ENCODE measurements at regions of chr9 and their contacts with region 1.

Region 1: GRCh38 chr9:116661037-116661954 is 25.8 kb upstream of the TRIM32 start:
- DNase-seq: peak; percentile 81
- H3K4me3 ChIP-seq: no peak overlapping the region
- H3K27ac ChIP-seq: no peak overlapping the region
- H3K4me1 ChIP-seq: peaks cover 22% of the 10 kb centered on the region
- H3K27me3 ChIP-seq: no peaks in the 10 kb centered on the region
- CTCF ChIP-seq: peak; percentile 86

Region 2: DNA sequence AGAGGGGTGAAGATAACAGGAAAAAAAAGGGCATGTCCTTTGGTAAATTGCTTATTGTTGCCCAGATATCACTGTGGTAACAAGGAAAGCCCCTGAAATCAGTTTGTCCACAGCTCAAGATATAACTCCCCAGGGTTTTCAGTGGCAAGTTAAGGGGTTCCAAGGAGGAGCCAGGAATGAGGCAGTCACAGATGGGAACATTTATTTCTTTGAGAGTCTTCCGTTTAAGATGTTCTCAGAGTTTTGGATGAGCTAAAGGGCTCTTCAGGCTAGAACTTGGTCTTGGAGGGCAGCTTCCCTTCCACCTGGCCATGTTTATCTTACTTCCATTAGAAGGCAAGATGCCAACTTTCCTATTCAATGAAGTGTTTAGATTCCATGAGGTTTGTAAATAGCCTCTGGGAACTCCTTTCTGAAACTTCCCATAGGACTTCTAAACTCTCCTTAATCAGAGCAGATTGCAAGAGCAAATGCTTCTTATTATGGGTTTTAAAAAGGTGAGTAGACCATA is 1265.7 kb before region 1 on chr9:
- CTCF ChIA-PET with region 1: interaction called, 10 read pairs
- POLR2A ChIA-PET with region 1: no interaction called
- intact Hi-C with region 1: no loop called
- DNase-seq: no peak
- H3K4me3 ChIP-seq: no peak overlapping the region
- H3K27ac ChIP-seq: no peak overlapping the region
- H3K4me1 ChIP-seq: peaks cover 61% of the 10 kb centered on the region
- H3K27me3 ChIP-seq: no peaks in the 10 kb centered on the region
- CTCF ChIP-seq: no peak

Region 3: DNA sequence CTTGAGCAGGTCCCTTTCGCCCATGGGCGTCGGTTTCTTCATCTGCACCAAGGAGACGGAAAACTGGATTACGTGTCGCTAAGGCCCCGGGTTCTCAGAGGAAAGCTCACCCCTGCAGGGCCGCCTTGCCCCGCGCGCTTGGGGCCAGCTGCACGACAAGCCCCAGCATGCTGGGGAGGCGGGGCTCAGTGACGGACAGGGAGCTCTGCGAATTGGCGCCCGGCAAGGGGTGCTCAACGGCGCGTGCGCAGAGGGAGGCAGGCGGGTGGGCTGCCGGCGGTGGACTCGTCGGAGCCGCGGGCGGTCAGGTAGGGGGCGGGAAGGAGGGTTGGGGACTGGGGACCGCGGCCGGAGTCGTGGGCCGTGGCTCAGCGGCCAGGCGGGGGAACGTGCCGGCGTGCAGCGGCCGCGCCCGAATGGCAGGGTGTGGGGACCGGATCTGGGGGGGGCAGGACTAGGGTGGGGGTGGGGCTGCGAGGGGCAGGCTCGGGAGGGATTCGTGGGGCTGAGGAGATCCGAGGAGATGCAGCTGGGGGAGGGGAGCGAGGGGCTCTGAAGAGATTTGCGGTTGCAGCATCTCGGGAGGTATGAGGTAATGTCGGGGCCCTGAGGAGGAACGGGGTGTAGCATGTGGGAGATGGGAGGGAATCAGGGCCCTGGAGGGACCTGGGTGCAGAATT is 25.9 kb after region 1 on chr9 and contains the start of gene TRIM32:
- CTCF ChIA-PET with region 1: no interaction called
- POLR2A ChIA-PET with region 1: interaction called, 13 read pairs
- intact Hi-C with region 1: no loop called
- DNase-seq: peak; percentile 96
- H3K4me3 ChIP-seq: peak within 1 kb of the TSS; percentile 73
- H3K27ac ChIP-seq: peak within 1 kb of the TSS; percentile 71
- H3K4me1 ChIP-seq: peaks cover 11% of the 10 kb centered on the region
- H3K27me3 ChIP-seq: no peaks in the 10 kb centered on the region
- CTCF ChIP-seq: no peak
- total RNA-seq, gene TRIM32: 28.9 and 29.4 TPM in 2 replicates